ENCODE measurements at regions of chr21 and their contacts with region 1.

Region 1: GRCh38 chr21:45140346-45140940 is 66.1 kb downstream of the ADARB1 start:
- DNase-seq: peak; percentile 92
- H3K4me3 ChIP-seq: no peak overlapping the region
- CTCF ChIP-seq: peak; percentile 94

Region 2: DNA sequence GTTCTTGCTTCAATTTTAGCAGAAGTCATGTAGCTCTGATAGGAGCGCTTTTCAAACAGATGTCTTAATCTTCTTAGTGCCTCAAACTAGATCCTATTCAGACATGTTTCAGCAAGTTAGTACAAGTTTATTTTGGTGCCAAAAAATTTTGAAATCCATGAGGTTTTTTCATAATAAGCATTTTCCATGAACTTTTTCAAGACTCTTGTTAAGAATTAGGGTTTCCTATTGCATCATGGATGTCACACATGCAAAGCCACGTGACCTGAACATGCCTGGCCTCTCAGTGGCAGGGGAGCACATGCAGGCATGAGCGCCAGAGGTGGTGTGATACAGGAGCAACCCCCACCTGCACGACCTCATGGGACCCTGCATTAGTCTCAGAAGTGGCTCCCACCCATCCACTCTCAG is 79.6 kb after region 1 on chr21:
- in situ Hi-C with region 1: no loop called
- DNase-seq: no peak
- H3K4me3 ChIP-seq: no peak overlapping the region
- CTCF ChIP-seq: no peak

Region 3: GRCh38 chr21:45234127-45234526 is 93.7 kb after region 1 on chr21:
- in situ Hi-C with region 1: loop called (anchors 5 kb)
- DNase-seq: no peak
- H3K4me3 ChIP-seq: no peak overlapping the region
- CTCF ChIP-seq: no peak

Region 4: GRCh38 chr21:45439161-45439872 is 298.9 kb after region 1 on chr21:
- in situ Hi-C with region 1: loop called (anchors 10 kb)
- DNase-seq: peak; percentile 71
- H3K4me3 ChIP-seq: no peak overlapping the region
- CTCF ChIP-seq: peak; percentile 89